PC-9 (cell line): ENCODE measurements at regions of chr3 and their contacts with region 1.

Region 1: DNA sequence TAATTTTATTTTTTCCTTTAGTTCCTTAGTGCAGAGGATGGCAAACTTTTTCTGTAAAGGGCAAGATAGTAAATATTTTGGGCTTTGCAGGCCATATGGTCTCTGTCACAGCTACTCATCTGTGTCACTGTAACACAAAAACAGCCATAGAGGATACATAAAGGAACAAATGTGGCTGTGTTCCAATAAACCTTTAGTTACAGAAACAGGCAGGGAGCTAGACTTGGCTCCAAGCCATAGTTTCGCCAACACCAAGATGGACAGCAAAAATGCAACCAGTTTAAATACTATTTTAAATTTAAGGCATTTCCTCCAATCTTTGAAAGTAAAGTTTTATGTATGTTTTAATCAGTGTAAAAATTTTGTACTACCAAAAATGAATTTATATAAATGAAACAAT is 753.4 kb downstream of the FHIT start:
- DNase-seq: no peak
- H3K4me3 ChIP-seq: no peak overlapping the region
- H3K27ac ChIP-seq: no peak overlapping the region
- H3K4me1 ChIP-seq: no peaks in the 10 kb centered on the region
- H3K27me3 ChIP-seq: no peaks in the 10 kb centered on the region
- CTCF ChIP-seq: no peak

Region 2: GRCh38 chr3:60509471-60509870 is 11.6 kb after region 1 on chr3:
- CTCF ChIA-PET with region 1: no interaction called
- POLR2A ChIA-PET with region 1: interaction called, 10 read pairs
- intact Hi-C with region 1: no loop called
- DNase-seq: no peak
- H3K4me3 ChIP-seq: no peak overlapping the region
- H3K27ac ChIP-seq: no peak overlapping the region
- H3K4me1 ChIP-seq: no peaks in the 10 kb centered on the region
- H3K27me3 ChIP-seq: no peaks in the 10 kb centered on the region
- CTCF ChIP-seq: no peak

Region 3: GRCh38 chr3:61111825-61112224 is 613.9 kb after region 1 on chr3:
- CTCF ChIA-PET with region 1: no interaction called
- POLR2A ChIA-PET with region 1: no interaction called
- intact Hi-C with region 1: no loop called
- DNase-seq: no peak
- H3K4me3 ChIP-seq: no peak overlapping the region
- H3K27ac ChIP-seq: no peak overlapping the region
- H3K4me1 ChIP-seq: no peaks in the 10 kb centered on the region
- H3K27me3 ChIP-seq: no peaks in the 10 kb centered on the region
- CTCF ChIP-seq: no peak